ENCODE measurements at regions of chr4 and their contacts with region 1.

Region 1: GRCh38 chr4:168710353-168710946 is 213.6 kb downstream of the PALLD start:
- DNase-seq: peak; percentile 58
- H3K4me3 Mint-ChIP-seq: no peak overlapping the region
- H3K27ac Mint-ChIP-seq: peak overlapping the region; percentile 46
- H3K4me1 Mint-ChIP-seq: peaks cover 16% of the 10 kb centered on the region
- H3K27me3 Mint-ChIP-seq: no peaks in the 10 kb centered on the region
- CTCF ChIP-seq: peak; percentile 59

Region 2: GRCh38 chr4:168183717-168184608 is 526.5 kb before region 1 on chr4:
- CTCF ChIA-PET with region 1: interaction called, 3 read pairs
- POLR2A ChIA-PET with region 1: no interaction called
- intact Hi-C with region 1: loop called (anchors 5 kb)
- DNase-seq: peak; percentile 50
- H3K4me3 Mint-ChIP-seq: no peak overlapping the region
- H3K27ac Mint-ChIP-seq: peak overlapping the region; percentile 4
- H3K4me1 Mint-ChIP-seq: no peaks in the 10 kb centered on the region
- H3K27me3 Mint-ChIP-seq: no peaks in the 10 kb centered on the region
- CTCF ChIP-seq: peak; percentile 66

Region 3: DNA sequence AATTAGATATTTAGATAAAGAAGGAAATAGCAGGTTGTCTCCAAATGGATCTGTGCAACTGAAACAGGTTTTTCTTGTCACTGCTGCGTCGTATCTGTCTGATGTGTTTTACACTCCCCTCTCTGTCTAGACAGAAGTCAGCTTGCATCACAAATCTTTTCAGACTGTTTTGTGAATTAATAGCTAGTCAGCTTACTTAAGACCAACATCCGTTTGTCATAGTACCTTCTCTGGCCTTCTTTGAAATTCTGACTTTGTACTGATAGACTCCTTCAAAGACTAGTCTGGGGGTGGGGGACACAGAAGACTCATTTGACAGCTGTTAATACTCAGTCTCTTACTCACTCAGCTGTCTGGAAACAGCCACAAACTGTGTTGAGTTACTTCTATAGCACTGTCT is 15.8 kb before region 1 on chr4:
- CTCF ChIA-PET with region 1: interaction called, 10 read pairs
- POLR2A ChIA-PET with region 1: interaction called, 4 read pairs
- intact Hi-C with region 1: no loop called
- DNase-seq: no peak
- H3K4me3 Mint-ChIP-seq: no peak overlapping the region
- H3K27ac Mint-ChIP-seq: no peak overlapping the region
- H3K4me1 Mint-ChIP-seq: peaks cover 6% of the 10 kb centered on the region
- H3K27me3 Mint-ChIP-seq: no peaks in the 10 kb centered on the region
- CTCF ChIP-seq: no peak

Region 4: DNA sequence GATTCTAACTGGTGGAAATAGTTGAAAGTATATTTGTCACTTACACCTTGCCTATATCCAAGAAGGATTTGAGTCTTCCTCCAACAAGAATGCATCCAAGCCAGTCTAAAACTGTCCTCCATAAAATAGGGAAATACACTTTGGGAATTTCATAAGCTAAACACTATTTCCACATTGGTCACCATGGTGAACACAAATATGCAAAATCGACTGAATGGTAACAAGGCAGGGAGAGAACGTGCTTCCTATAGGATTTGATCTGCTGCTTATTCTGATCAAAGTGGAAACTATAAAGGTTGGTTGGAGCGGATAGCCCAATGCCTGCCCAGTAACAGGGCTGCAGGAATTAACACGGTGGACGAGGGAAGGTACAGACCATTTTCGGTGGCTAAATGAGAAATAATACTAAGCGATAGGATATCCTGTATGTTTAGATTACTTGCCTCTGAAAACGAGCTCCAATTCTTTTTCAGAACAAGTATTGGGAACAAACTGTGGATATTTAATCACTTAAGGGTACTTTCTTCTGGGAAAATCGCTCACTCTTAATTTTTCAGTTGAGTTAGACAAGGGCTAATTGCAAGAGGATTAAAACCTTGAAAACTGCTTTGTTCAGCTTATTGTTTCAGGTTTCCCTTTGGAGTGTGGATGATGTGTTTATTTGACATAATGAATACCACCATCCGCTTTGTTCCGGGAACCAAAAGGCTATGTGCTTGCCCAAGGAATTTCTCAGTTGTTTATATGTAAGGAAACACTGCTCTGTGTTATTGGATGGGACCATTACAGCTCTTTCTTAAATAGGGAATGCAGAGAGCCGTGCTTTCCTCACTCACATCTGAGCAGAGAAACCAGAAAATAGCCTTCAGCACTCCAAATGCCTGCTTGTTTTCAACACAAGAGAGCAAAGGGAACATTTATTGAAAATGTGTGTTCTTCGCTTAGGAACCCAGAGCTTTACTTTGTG is 105.2 kb after region 1 on chr4:
- CTCF ChIA-PET with region 1: interaction called, 19 read pairs
- POLR2A ChIA-PET with region 1: interaction called, 4 read pairs
- intact Hi-C with region 1: no loop called
- DNase-seq: no peak
- H3K4me3 Mint-ChIP-seq: no peak overlapping the region
- H3K27ac Mint-ChIP-seq: peak overlapping the region; percentile 70
- H3K4me1 Mint-ChIP-seq: peaks cover 29% of the 10 kb centered on the region
- H3K27me3 Mint-ChIP-seq: no peaks in the 10 kb centered on the region
- CTCF ChIP-seq: no peak

Region 5: DNA sequence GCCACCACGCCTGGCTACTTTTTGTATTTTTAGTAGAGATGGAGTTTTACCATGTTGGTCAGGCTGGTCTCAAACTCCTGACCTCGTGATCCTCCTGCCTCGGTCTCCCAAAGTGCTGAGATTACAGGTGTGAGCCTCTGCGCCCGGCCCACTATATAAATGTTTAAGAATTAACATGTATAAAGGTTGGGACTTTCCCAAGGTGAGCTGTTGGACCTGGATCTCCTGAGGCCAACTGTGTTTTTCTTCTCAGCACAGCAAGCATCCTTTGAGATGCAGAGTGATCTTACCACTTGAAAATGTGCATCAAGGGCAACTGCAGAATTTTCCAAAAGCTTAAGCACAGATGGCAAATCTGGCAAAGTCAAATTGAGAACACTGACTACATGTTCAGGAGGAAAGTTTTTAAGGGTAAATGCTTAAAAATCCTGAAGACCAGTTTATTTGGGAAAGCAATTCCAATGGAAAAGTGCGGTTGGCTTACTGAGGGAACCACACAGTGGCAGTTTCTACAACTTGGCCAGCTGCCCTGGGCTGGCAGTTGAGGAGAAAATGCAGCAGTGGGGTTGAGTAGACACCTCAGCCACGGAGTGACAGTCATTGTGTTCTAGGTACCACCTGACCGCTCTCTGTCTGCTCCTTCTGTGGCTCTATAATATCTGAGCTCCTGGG is 130.7 kb after region 1 on chr4:
- CTCF ChIA-PET with region 1: interaction called, 34 read pairs
- POLR2A ChIA-PET with region 1: interaction called, 9 read pairs
- intact Hi-C with region 1: no loop called
- DNase-seq: peak; percentile 31
- H3K4me3 Mint-ChIP-seq: no peak overlapping the region
- H3K27ac Mint-ChIP-seq: no peak overlapping the region
- H3K4me1 Mint-ChIP-seq: peaks cover 61% of the 10 kb centered on the region
- H3K27me3 Mint-ChIP-seq: no peaks in the 10 kb centered on the region
- CTCF ChIP-seq: no peak

Region 6: DNA sequence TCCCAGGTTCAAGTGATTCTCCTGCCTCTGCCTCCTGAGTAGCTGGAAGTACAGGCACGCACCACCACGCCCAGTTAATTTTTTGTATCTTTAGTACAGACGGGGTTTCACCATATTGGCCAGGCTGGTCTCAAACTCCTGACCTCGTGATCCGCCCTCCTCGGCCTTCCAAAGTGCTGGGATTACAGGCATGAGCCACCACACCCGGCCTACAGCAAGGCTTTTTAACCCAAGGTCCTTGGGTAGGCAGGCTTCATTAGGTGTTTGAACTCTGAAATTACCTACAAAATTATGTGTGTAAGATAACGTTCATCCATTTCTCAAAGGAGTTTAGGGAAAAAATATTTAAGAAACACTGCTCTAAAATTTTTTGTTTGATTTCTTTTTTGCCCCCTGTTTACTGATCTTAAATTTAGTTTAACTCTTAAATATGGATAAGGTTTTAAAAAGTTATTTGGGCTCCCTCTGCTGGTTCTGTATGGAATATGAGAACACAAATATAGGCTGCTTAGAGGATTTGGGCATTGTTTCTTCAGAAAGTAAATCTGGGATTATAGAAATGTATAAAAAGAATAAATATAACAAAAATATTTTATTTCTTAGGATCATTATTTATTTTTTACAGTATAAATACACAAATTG is 206.8 kb after region 1 on chr4:
- CTCF ChIA-PET with region 1: interaction called, 173 read pairs
- POLR2A ChIA-PET with region 1: interaction called, 5 read pairs
- intact Hi-C with region 1: loop called (anchors 1 kb)
- DNase-seq: peak; percentile 64
- H3K4me3 Mint-ChIP-seq: no peak overlapping the region
- H3K27ac Mint-ChIP-seq: no peak overlapping the region
- H3K4me1 Mint-ChIP-seq: peaks cover 5% of the 10 kb centered on the region
- H3K27me3 Mint-ChIP-seq: no peaks in the 10 kb centered on the region
- CTCF ChIP-seq: peak; percentile 52

Measured in MCF 10A (cell line).